B cell (primary cell): ENCODE measurements at regions of chr9 and their contacts with region 1.

Region 1: DNA sequence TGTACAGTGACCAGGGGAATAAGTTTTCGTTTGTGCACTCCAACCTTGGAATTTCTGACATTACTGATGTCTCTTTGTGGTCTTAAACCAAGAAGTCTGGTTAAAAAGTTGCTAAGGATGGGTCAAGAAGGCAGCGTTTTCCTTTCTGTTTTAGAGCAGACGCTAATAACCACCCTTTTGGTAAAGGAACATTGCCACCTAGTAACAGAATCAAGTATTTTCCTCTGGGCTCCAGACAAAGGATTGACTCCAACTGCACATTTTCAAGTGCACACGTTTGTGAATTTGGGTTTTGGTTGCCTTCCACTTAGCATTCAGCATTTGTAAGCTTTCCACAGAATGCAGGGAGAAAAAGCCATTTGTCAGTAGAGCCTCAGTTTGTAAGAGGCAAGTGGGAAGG is 22.2 kb upstream of the CEP78 start:
- DNase-seq: peak; percentile 48
- ATAC-seq: no peak
- H3K4me3 ChIP-seq: no peak overlapping the region
- H3K4me3 Mint-ChIP-seq: no peak overlapping the region
- H3K27ac ChIP-seq: no peak overlapping the region
- H3K27ac Mint-ChIP-seq: no peak overlapping the region
- H3K4me1 ChIP-seq: peaks cover 19 to 20% of the 10 kb centered on the region in 2 donors
- H3K4me1 Mint-ChIP-seq: peaks cover 27% of the 10 kb centered on the region
- H3K27me3 ChIP-seq: no peaks in the 10 kb centered on the region
- H3K27me3 Mint-ChIP-seq: peaks cover 1% of the 10 kb centered on the region
- CTCF ChIP-seq: peak; percentile 42

Region 2: GRCh38 chr9:78035383-78035993 is 178.2 kb before region 1 on chr9:
- CTCF ChIA-PET with region 1: no interaction called
- POLR2A ChIA-PET with region 1: no interaction called
- intact Hi-C with region 1: loop called (anchors 10 kb)
- DNase-seq: peak; percentile 68
- ATAC-seq: no peak
- H3K4me3 ChIP-seq: no peak overlapping the region
- H3K4me3 Mint-ChIP-seq: no peak overlapping the region
- H3K27ac ChIP-seq: no peak overlapping the region
- H3K27ac Mint-ChIP-seq: no peak overlapping the region
- H3K4me1 ChIP-seq: peaks cover 18 to 19% of the 10 kb centered on the region in 2 donors
- H3K4me1 Mint-ChIP-seq: peaks cover 13% of the 10 kb centered on the region
- H3K27me3 ChIP-seq: peaks cover 0 to 42% (median 34%) of the 10 kb centered on the region in 4 experiments
- H3K27me3 Mint-ChIP-seq: peaks cover 55% of the 10 kb centered on the region
- CTCF ChIP-seq: peak; percentile 71

Region 3: DNA sequence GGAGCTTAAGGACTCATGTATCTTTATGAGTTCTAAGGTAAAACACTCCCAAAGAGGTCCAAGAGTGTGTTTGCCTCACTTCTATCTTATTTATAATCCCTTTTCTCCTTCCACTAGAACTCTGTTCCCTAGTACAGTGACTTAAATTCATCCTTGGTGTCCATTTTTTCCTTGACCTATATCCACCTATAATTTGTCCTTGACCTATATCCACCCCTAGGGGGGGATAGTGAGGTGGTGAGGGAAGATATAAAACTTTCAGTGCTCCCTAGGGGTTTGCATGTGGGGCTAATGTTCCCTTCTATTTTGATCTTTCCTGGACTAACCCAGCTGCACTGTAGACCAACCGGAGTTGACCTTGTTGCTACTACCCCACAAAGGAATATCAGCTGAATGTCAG is 98.6 kb before region 1 on chr9:
- CTCF ChIA-PET with region 1: interaction called, 7 read pairs
- POLR2A ChIA-PET with region 1: no interaction called
- intact Hi-C with region 1: loop called (anchors 1 kb)
- DNase-seq: peak; percentile 60
- ATAC-seq: peak; percentile 45
- H3K4me3 ChIP-seq: no peak overlapping the region
- H3K4me3 Mint-ChIP-seq: no peak overlapping the region
- H3K27ac ChIP-seq: no peak overlapping the region
- H3K27ac Mint-ChIP-seq: no peak overlapping the region
- H3K4me1 ChIP-seq: peaks cover 17% of the 10 kb centered on the region in 2 donors
- H3K4me1 Mint-ChIP-seq: peaks cover 21% of the 10 kb centered on the region
- H3K27me3 ChIP-seq: peaks cover 0 to 38% (median 20%) of the 10 kb centered on the region in 4 experiments
- H3K27me3 Mint-ChIP-seq: peaks cover 56% of the 10 kb centered on the region
- CTCF ChIP-seq: peak; percentile 67

Region 4: DNA sequence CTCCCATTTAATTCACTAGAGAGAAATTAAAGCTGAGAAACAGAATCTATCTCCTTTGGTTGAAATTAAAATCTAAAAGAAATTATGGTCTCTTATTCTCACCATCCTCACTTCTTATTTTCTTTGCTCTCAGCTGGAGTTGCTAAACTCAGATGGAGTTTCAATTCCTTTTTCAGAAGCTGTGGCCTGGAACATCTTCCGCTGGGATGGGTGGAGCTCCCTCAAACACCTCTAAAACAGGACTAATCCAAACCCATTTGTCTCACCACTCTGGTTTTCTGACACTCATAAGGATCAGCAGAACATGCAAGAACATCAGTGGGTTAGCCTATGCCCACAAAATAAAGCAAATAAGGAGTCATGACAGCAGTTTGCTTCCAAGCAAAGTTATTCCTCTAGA is 17.5 kb before region 1 on chr9:
- CTCF ChIA-PET with region 1: interaction called, 3 read pairs
- POLR2A ChIA-PET with region 1: interaction called, 3 read pairs
- intact Hi-C with region 1: loop called (anchors 2 kb)
- DNase-seq: peak; percentile 49
- ATAC-seq: peak; percentile 41
- H3K4me3 ChIP-seq: peak overlapping the region in 3 of 5 experiments; percentile 8 to 36 (median 16)
- H3K4me3 Mint-ChIP-seq: peak overlapping the region; percentile 73
- H3K27ac ChIP-seq: peak overlapping the region in 1 of 2 donors; percentile 48
- H3K27ac Mint-ChIP-seq: peak overlapping the region; percentile 74
- H3K4me1 ChIP-seq: peaks cover 38 to 42% of the 10 kb centered on the region in 2 donors
- H3K4me1 Mint-ChIP-seq: peaks cover 47% of the 10 kb centered on the region
- H3K27me3 ChIP-seq: no peaks in the 10 kb centered on the region
- H3K27me3 Mint-ChIP-seq: no peaks in the 10 kb centered on the region
- CTCF ChIP-seq: no peak

Region 5: GRCh38 chr9:78248635-78249034 is 34.9 kb after region 1 on chr9:
- CTCF ChIA-PET with region 1: no interaction called
- POLR2A ChIA-PET with region 1: no interaction called
- intact Hi-C with region 1: no loop called
- DNase-seq: no peak
- ATAC-seq: no peak
- H3K4me3 ChIP-seq: no peak overlapping the region
- H3K4me3 Mint-ChIP-seq: no peak overlapping the region
- H3K27ac ChIP-seq: no peak overlapping the region
- H3K27ac Mint-ChIP-seq: no peak overlapping the region
- H3K4me1 ChIP-seq: no peaks in the 10 kb centered on the region
- H3K4me1 Mint-ChIP-seq: no peaks in the 10 kb centered on the region
- H3K27me3 ChIP-seq: no peaks in the 10 kb centered on the region
- H3K27me3 Mint-ChIP-seq: no peaks in the 10 kb centered on the region
- CTCF ChIP-seq: no peak

Region 6: GRCh38 chr9:78304357-78304756 is 90.6 kb after region 1 on chr9:
- CTCF ChIA-PET with region 1: no interaction called
- POLR2A ChIA-PET with region 1: no interaction called
- intact Hi-C with region 1: no loop called
- DNase-seq: no peak
- ATAC-seq: no peak
- H3K4me3 ChIP-seq: no peak overlapping the region
- H3K4me3 Mint-ChIP-seq: no peak overlapping the region
- H3K27ac ChIP-seq: no peak overlapping the region
- H3K27ac Mint-ChIP-seq: no peak overlapping the region
- H3K4me1 ChIP-seq: no peaks in the 10 kb centered on the region
- H3K4me1 Mint-ChIP-seq: no peaks in the 10 kb centered on the region
- H3K27me3 ChIP-seq: no peaks in the 10 kb centered on the region
- H3K27me3 Mint-ChIP-seq: no peaks in the 10 kb centered on the region
- CTCF ChIP-seq: no peak

Region 7: DNA sequence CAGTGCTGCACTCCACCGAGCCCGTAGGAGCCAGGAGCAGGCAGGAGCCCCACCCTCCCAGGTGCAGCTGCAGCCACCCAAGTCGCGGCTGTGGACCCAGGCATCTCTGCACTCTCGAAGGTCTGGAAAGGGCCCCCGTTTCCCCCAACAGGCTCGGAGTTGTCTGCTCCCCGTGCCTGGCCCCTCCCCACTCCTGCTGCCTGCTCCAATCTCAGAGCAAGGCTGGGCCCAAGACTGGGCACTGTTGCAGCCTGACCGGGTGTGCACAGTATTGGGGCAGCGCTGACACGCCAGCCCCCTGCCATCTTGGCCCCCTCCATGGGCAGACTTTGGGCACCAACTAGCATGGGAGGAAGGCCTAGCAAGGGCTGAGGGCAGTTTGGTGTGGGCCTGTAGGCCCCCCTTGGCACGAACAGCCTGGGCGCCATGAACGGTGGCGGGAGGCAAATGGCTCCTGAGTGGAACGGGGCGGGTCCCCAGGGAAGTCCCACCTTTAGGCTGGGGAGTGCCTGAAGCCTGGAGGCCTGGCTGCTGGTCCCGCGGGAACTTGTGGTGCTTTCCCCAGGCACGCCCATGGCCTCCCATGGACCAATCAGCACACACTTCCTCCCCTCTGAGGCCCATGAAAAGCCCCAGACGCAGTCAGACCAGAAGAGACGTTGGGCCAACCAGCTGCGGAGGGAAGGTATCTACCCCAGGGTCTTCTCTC is 143.6 kb after region 1 on chr9:
- CTCF ChIA-PET with region 1: no interaction called
- POLR2A ChIA-PET with region 1: no interaction called
- intact Hi-C with region 1: no loop called
- DNase-seq: no peak
- ATAC-seq: peak; percentile 33
- H3K4me3 ChIP-seq: no peak overlapping the region
- H3K4me3 Mint-ChIP-seq: no peak overlapping the region
- H3K27ac ChIP-seq: no peak overlapping the region
- H3K27ac Mint-ChIP-seq: no peak overlapping the region
- H3K4me1 ChIP-seq: no peaks in the 10 kb centered on the region
- H3K4me1 Mint-ChIP-seq: no peaks in the 10 kb centered on the region
- H3K27me3 ChIP-seq: no peaks in the 10 kb centered on the region
- H3K27me3 Mint-ChIP-seq: no peaks in the 10 kb centered on the region
- CTCF ChIP-seq: no peak